ENCODE measurements at regions of chr1 and their contacts with region 1.

Region 1: GRCh38 chr1:109532365-109533136 is 7.1 kb upstream of the GPR61 start:
- DNase-seq: peak; percentile 83
- H3K4me3 Mint-ChIP-seq: peak overlapping the region; percentile 32
- H3K27ac Mint-ChIP-seq: peak overlapping the region; percentile 80
- H3K4me1 Mint-ChIP-seq: peaks cover 19% of the 10 kb centered on the region
- H3K27me3 Mint-ChIP-seq: no peaks in the 10 kb centered on the region

Region 2: DNA sequence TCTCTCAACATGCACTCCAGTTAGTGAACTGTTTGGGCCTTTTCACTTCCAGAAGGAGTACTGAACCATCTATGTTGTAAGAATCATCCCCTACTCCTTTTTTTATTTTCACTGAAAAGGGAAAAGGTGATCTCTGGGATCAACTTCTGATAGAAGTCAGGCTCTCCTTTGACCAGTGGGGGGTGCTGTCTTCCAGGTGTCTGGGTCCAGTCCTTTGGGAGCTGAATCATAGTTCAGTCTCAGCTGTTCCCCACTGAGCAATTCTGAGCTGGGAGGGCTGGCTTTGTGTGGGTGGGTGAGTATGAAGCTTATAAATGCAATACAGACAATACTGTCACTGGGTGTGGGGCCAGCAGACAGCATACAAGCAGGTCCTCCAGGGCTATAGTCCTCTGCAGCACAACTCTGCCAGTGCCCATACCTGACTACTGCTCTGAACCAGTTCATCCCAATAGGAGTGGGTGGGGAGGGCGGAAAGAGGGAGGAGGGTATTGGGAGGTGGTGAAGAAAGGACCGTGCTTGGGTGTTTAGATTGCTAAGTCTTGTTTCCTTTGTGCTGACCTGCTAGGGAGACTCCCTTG is 331.3 kb before region 1 on chr1:
- intact Hi-C with region 1: loop called (anchors 1 kb)
- DNase-seq: peak; percentile 16
- H3K4me3 Mint-ChIP-seq: no peak overlapping the region
- H3K27ac Mint-ChIP-seq: no peak overlapping the region
- H3K4me1 Mint-ChIP-seq: peaks cover 24% of the 10 kb centered on the region
- H3K27me3 Mint-ChIP-seq: no peaks in the 10 kb centered on the region

Region 3: GRCh38 chr1:109263597-109264398 is 268.8 kb before region 1 on chr1:
- intact Hi-C with region 1: loop called (anchors 1 kb)
- DNase-seq: peak; percentile 74
- H3K4me3 Mint-ChIP-seq: no peak overlapping the region
- H3K27ac Mint-ChIP-seq: no peak overlapping the region
- H3K4me1 Mint-ChIP-seq: no peaks in the 10 kb centered on the region
- H3K27me3 Mint-ChIP-seq: no peaks in the 10 kb centered on the region

Region 4: GRCh38 chr1:109277434-109278204 is 254.9 kb before region 1 on chr1:
- intact Hi-C with region 1: loop called (anchors 2 kb)
- DNase-seq: peak; percentile 52
- H3K4me3 Mint-ChIP-seq: no peak overlapping the region
- H3K27ac Mint-ChIP-seq: peak overlapping the region; percentile 46
- H3K4me1 Mint-ChIP-seq: peaks cover 19% of the 10 kb centered on the region
- H3K27me3 Mint-ChIP-seq: no peaks in the 10 kb centered on the region

Region 5: DNA sequence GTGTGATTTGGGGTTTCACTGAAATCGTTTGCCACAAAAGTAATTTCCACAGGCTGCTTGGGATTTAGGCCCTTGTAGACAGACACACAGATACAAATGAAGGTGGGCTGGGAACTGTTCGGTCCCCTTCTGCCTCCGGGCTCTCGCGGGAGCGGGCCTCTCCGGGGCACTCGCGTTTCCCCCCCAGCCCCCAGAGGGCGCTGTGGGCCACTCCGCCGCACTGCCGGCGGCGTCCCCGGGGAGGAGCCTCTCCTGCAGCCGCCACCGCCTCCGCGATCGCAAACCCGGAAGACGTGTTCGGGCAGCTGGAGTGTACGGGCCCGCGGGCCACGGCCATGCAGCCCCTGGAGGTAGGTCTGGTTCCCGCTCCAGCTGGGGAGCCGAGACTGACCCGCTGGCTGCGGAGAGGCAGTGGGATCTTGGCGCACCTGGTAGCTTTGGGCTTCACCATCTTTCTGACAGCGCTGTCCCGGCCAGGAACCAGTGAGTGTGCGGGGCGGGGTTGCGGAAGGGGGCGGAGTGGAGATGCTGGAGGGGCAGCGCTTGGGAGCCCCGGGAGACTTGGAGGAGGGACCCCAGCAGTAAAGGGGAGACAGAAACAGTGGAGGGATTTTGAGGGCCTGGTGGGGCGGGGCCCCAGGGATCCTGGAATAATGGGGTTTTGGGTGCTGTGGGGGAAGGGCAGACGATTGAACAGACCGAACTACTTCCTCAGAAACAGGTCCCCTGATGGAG is 38.6 kb before region 1 on chr1 and contains the start of gene CYB561D1:
- intact Hi-C with region 1: loop called (anchors 1 kb)
- DNase-seq: peak; percentile 87
- H3K4me3 Mint-ChIP-seq: peak within 1 kb of the TSS; percentile 94
- H3K27ac Mint-ChIP-seq: peak within 1 kb of the TSS; percentile 75
- H3K4me1 Mint-ChIP-seq: peaks cover 24% of the 10 kb centered on the region
- H3K27me3 Mint-ChIP-seq: no peaks in the 10 kb centered on the region
- total RNA-seq, gene CYB561D1: 11.1 and 13.6 TPM in 2 replicates